ENCODE measurements at regions of chrX and their contacts with region 1.

Region 1: DNA sequence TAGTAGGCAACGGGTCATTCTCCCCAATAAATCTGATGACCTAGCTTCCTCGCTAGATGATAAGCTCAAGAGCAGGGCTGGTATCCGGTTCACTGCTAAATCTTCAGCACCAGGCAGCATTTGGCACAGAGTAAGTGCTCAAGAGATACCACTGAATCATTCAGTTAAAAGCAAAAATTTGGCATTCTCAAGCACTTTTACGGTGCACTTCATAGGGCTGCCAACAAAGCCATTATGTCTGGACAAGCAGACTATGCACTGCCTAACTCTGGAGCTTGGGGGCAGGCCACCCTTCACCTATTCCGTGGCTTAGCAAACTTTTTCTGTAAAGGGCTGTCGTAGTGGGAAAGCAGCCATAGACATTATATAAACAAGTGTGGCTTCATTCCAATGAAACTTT is 23.8 kb upstream of the CXorf38 start:
- H3K4me3 Mint-ChIP-seq: no peak overlapping the region
- H3K27ac Mint-ChIP-seq: no peak overlapping the region
- H3K4me1 Mint-ChIP-seq: peaks cover 23% of the 10 kb centered on the region
- H3K27me3 Mint-ChIP-seq: no peaks in the 10 kb centered on the region

Region 2: DNA sequence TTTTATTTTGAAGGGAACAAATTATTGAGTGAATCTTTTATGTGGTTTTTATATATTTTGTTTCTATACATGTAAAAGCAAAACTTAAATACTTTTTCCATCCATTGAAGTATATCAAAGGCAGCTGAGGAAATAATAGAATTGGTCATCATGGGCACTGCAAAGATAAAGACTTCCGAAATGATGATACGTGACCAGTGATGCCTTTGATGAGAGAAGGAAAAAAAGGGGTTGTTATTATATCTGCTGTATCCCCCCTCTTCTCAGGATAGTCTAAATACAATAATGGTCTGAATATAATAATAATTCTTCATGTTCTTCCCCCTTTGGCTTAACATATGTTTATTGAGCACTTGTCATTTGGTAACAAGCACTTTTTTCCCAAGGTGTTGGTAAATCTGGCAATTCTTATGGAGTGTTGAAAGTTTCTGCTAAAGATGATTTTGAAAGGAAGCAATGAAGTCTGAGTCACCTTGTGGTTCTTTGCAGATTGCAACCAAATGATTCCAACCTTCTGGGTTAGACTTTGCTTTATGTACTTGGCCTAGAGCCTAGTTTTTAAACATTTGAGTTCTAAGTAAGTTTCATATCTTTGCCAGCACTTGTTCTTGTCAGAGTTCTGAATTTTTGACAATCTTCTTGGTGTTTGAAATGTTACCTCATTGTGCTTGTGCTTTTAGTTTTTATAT is 474.9 kb after region 1 on chrX:
- intact Hi-C with region 1: loop called (anchors 10 kb)
- H3K4me3 Mint-ChIP-seq: no peak overlapping the region
- H3K27ac Mint-ChIP-seq: no peak overlapping the region
- H3K4me1 Mint-ChIP-seq: no peaks in the 10 kb centered on the region
- H3K27me3 Mint-ChIP-seq: no peaks in the 10 kb centered on the region